Right lobe of liver (tissue), 6 donors: ENCODE measurements at regions of chr17 and their contacts with region 1.

Region 1: DNA sequence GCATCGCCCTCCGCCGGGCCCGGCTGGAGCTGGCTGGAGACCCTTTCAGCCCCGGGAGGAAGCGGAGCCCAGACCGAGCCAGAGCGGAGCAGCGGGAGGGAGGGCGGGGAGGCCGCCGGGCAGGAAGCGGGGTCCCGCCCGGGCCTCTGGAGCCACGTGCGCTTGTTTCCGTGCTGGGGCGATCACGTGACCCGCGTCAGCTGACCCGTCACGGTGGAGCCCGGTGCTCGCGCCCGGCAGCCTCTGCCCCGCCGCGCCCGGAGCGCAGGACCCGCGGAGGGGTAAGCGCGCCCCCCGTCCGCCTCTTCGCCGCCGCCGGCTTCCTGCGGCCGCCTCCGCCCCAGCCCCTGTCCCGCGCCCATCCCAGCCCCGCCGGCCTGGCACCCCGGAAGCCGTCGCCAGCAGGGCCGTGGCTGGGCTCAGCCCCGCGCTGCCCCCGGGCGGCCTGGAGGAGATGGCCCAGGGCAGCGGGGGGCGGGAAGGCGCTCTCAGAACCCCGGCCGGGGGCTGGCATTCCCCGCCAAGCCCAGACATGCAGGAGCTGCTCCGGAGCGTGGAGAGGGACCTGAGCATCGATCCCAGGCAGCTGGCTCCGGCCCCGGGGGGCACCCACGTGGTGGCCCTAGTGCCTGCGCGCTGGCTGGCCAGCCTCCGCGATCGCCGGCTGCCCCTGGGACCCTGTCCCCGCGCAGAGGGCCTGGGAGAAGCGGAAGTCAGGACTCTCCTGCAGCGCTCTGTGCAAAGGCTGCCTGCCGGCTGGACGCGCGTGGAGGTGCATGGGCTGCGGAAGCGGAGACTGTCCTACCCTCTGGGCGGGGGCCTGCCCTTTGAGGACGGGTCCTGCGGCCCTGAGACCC is at the start of gene WDR81:
- DNase-seq: peak; percentile 94 to 96 (median 94)
- ATAC-seq: peak; percentile 72 to 85 (median 79)
- H3K4me3 ChIP-seq: peak within 1 kb of the TSS; percentile 75 to 90 (median 82)
- H3K27ac ChIP-seq: peak within 1 kb of the TSS; percentile 66 to 85 (median 74)
- H3K4me1 ChIP-seq: peaks cover 0 to 39% (median 14%) of the 10 kb centered on the region in 4 donors
- H3K27me3 ChIP-seq: no peaks in the 10 kb centered on the region
- CTCF ChIP-seq: peak in 1 of 4 donors; percentile 24
- POLR2A ChIP-seq: peak; percentile 35
- total RNA-seq, gene WDR81: 23.0 to 27.2 (median 23.9) TPM

Region 2: DNA sequence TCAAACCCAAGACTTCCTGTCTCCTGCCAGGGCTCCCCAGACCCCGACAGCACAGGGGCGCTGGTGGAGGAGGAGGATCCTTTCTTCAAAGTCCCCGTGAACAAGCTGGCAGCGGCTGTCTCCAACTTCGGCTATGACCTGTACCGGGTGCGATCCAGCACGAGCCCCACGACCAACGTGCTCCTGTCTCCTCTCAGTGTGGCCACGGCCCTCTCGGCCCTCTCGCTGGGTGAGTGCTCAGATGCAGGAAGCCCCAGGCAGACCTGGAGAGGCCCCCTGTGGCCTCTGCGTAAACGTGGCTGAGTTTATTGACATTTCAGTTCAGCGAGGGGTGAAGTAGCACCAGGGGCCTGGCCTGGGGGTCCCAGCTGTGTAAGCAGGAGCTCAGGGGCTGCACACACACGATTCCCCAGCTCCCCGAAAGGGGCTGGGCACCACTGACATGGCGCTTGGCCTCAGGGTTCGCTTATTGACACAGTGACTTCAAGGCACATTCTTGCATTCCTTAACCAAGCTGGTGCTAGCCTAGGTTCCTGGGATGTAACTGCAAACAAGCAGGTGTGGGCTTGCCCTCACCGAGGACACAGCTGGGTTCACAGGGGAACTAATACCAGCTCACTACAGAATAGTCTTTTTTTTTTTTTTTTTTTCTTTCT is 45.2 kb after region 1 on chr17:
- intact Hi-C with region 1: loop called in 1 of 2 experiments (anchors 5 kb)
- DNase-seq: no peak
- ATAC-seq: no peak
- H3K4me3 ChIP-seq: no peak overlapping the region
- H3K27ac ChIP-seq: no peak overlapping the region
- H3K4me1 ChIP-seq: peaks cover 0 to 23% (median 8%) of the 10 kb centered on the region in 4 donors
- H3K27me3 ChIP-seq: no peaks in the 10 kb centered on the region
- CTCF ChIP-seq: no peak
- POLR2A ChIP-seq: no peak